ENCODE measurements at regions of chr1 and their contacts with region 1.

Region 1: GRCh38 chr1:192474080-192474683 is 101.4 kb upstream of the RGS1 start:
- DNase-seq: no peak
- ATAC-seq: no peak
- H3K4me3 Mint-ChIP-seq: no peak overlapping the region
- H3K27ac Mint-ChIP-seq: no peak overlapping the region
- H3K4me1 Mint-ChIP-seq: no peaks in the 10 kb centered on the region
- H3K27me3 Mint-ChIP-seq: no peaks in the 10 kb centered on the region
- CTCF ChIP-seq: peak; percentile 39

Region 2: GRCh38 chr1:192610112-192610958 is 136.2 kb after region 1 on chr1:
- CTCF ChIA-PET with region 1: interaction called, 11 read pairs
- POLR2A ChIA-PET with region 1: no interaction called
- DNase-seq: no peak
- ATAC-seq: no peak
- H3K4me3 Mint-ChIP-seq: no peak overlapping the region
- H3K27ac Mint-ChIP-seq: no peak overlapping the region
- H3K4me1 Mint-ChIP-seq: no peaks in the 10 kb centered on the region
- H3K27me3 Mint-ChIP-seq: no peaks in the 10 kb centered on the region
- CTCF ChIP-seq: no peak